ENCODE measurements at regions of chr2 and their contacts with region 1.

Region 1: GRCh38 chr2:102771114-102771513 is 9.3 kb downstream of the TMEM182 start:
- DNase-seq: no peak
- H3K4me3 ChIP-seq: no peak overlapping the region
- H3K27ac ChIP-seq: no peak overlapping the region
- H3K4me1 ChIP-seq: no peaks in the 10 kb centered on the region
- H3K27me3 ChIP-seq: no peaks in the 10 kb centered on the region
- CTCF ChIP-seq: no peak
- POLR2A ChIP-seq: no peak

Region 2: GRCh38 chr2:102736410-102737409 is 34.4 kb before region 1 on chr2:
- intact Hi-C with region 1: no loop called
- DNase-seq: peak; percentile 52 to 72
- H3K4me3 ChIP-seq: peak overlapping the region; percentile 80 to 94 (median 90)
- H3K27ac ChIP-seq: peak overlapping the region; percentile 81 to 89
- H3K4me1 ChIP-seq: no peaks in the 10 kb centered on the region
- H3K27me3 ChIP-seq: no peaks in the 10 kb centered on the region
- CTCF ChIP-seq: no peak
- POLR2A ChIP-seq: peak; percentile 59

Region 3: DNA sequence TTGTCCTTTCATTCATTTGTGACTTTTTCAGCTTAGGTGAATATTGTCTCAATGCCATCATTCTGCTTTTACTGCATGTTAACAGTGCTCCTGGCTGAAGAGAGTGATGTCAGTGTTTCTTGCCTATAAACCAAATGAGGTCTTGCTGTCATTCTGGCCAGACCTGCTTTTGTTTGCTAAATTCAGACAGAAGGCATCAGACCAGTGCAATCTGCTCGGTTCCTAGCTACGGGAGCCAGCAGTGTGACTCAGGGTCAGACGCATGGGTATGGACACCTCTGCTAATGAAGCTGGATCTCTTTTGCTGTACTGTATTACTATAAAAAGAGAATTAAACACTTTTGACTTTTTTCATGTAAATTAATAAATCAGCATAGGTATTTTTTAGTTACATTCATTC is 169.6 kb after region 1 on chr2:
- intact Hi-C with region 1: no loop called
- DNase-seq: no peak
- H3K4me3 ChIP-seq: no peak overlapping the region
- H3K27ac ChIP-seq: no peak overlapping the region
- H3K4me1 ChIP-seq: no peaks in the 10 kb centered on the region
- H3K27me3 ChIP-seq: no peaks in the 10 kb centered on the region
- CTCF ChIP-seq: no peak
- POLR2A ChIP-seq: no peak

Region 4: GRCh38 chr2:104402825-104403224 is 1631.7 kb after region 1 on chr2:
- intact Hi-C with region 1: loop called (anchors 5 kb)
- DNase-seq: no peak
- H3K4me3 ChIP-seq: no peak overlapping the region
- H3K27ac ChIP-seq: no peak overlapping the region
- H3K4me1 ChIP-seq: no peaks in the 10 kb centered on the region
- H3K27me3 ChIP-seq: no peaks in the 10 kb centered on the region
- CTCF ChIP-seq: no peak
- POLR2A ChIP-seq: no peak